CD8-positive, alpha-beta T cell (primary cell): ENCODE measurements at regions of chr14 and their contacts with region 1.

Region 1: DNA sequence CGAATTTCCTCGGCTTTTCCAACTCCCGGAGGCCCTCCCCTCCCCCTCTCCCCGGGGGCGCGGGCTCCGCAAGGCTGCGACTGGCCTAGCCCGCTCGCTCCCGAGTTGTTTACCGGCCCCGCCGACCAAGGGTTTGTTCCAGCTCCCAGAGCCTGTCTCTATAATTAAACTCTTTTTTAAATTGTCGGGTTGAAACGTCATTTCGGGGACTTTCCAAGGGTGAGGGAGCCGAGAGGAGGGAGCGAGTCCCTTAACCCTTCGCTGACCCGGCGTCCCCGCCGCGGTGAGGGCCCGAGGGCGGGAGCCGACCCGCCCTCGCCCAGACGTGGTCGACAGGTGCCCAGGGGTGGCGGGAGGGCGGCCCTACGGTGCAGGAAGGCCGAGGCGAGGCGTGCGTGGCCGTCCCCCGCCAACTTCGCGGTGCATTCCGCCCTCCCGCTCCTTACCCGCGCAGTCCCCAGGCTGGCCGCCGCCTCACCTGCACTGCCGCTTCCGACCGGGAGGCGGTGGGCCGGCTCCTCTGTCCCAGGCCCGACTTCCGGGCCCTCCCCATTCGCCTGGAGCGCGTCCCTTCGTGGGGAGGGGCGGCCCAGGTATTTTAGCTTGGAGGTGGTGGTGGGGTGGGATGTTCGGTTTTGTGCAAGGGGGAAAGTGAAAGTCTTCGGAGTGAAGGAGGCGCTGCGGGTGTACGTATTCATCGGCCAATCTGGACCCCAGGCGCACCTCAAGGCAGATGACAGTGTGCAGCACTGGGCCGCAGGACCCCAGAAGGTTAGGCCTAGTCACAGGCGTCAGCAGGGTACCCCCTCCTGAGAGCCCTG is 2.9 kb upstream of the ZFP36L1 start:
- DNase-seq: peak; percentile 60 to 94 (median 82)
- ATAC-seq: peak; percentile 41
- H3K4me3 ChIP-seq: peak overlapping the region; percentile 94 to 97
- H3K4me3 Mint-ChIP-seq: peak overlapping the region; percentile 92
- H3K27ac ChIP-seq: peak overlapping the region; percentile 99 to 100
- H3K27ac Mint-ChIP-seq: peak overlapping the region; percentile 100
- H3K4me1 ChIP-seq: peaks cover 18% of the 10 kb centered on the region
- H3K4me1 Mint-ChIP-seq: peaks cover 37% of the 10 kb centered on the region
- H3K27me3 ChIP-seq: no peaks in the 10 kb centered on the region
- H3K27me3 Mint-ChIP-seq: no peaks in the 10 kb centered on the region
- CTCF ChIP-seq: peak; percentile 71

Region 2: GRCh38 chr14:68506021-68506644 is 289.7 kb before region 1 on chr14:
- CTCF ChIA-PET with region 1: interaction called, 5 read pairs
- POLR2A ChIA-PET with region 1: interaction called, 90 read pairs
- intact Hi-C with region 1: loop called in 1 of 2 experiments (anchors 2 kb)
- DNase-seq: peak in 1 of 9 experiments; percentile 25
- ATAC-seq: no peak
- H3K4me3 ChIP-seq: no peak overlapping the region
- H3K4me3 Mint-ChIP-seq: peak overlapping the region; percentile 64
- H3K27ac ChIP-seq: peak overlapping the region; percentile 49 to 52
- H3K27ac Mint-ChIP-seq: peak overlapping the region; percentile 91
- H3K4me1 ChIP-seq: peaks cover 64% of the 10 kb centered on the region
- H3K4me1 Mint-ChIP-seq: peaks cover 73% of the 10 kb centered on the region
- H3K27me3 ChIP-seq: no peaks in the 10 kb centered on the region
- H3K27me3 Mint-ChIP-seq: no peaks in the 10 kb centered on the region
- CTCF ChIP-seq: no peak

Region 3: GRCh38 chr14:68780358-68781160 is 15.2 kb before region 1 on chr14:
- CTCF ChIA-PET with region 1: interaction called, 59 read pairs
- POLR2A ChIA-PET with region 1: interaction called, 164 read pairs
- intact Hi-C with region 1: loop called in 1 of 2 experiments (anchors 1 kb)
- DNase-seq: peak in 5 of 9 experiments; percentile 36 to 72 (median 58)
- ATAC-seq: peak; percentile 11
- H3K4me3 ChIP-seq: peak overlapping the region; percentile 29 to 41
- H3K4me3 Mint-ChIP-seq: peak overlapping the region; percentile 83
- H3K27ac ChIP-seq: peak overlapping the region; percentile 47 to 86
- H3K27ac Mint-ChIP-seq: peak overlapping the region; percentile 96
- H3K4me1 ChIP-seq: peaks cover 82% of the 10 kb centered on the region
- H3K4me1 Mint-ChIP-seq: peaks cover 84% of the 10 kb centered on the region
- H3K27me3 ChIP-seq: no peaks in the 10 kb centered on the region
- H3K27me3 Mint-ChIP-seq: no peaks in the 10 kb centered on the region
- CTCF ChIP-seq: no peak

Region 4: DNA sequence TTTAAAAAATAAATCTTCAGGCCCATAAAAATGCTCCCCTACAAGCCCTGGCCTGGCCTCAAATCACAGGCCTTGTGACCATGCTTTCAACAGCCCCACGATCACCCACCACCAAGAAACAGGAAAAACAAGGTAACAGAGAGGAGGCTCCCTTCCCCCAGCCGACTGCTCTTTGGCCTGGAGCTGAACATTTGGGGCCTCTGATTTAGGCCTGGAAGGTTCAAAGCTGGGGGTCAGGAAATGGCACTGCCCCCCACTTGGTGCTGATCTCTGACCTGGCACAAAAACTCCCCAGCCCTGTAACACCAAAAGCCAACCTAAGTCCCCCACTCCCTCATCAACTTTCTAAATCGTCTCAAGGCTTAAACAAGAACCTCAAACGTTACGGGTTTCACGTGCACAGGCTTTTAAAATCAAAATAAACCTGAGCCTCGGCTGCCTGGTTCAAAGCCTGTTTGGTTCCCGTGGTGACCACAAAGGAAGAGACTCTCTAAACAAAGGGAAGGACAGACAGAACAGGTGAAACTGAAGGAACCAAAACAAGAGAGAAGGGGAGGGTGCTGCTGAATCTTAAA is 174.3 kb after region 1 on chr14:
- CTCF ChIA-PET with region 1: no interaction called
- POLR2A ChIA-PET with region 1: no interaction called
- intact Hi-C with region 1: loop called (anchors 2 to 5 kb)
- DNase-seq: peak; percentile 30 to 86 (median 64)
- ATAC-seq: peak; percentile 59
- H3K4me3 ChIP-seq: peak overlapping the region; percentile 3 to 31
- H3K4me3 Mint-ChIP-seq: peak overlapping the region; percentile 81
- H3K27ac ChIP-seq: peak overlapping the region; percentile 67 to 73
- H3K27ac Mint-ChIP-seq: peak overlapping the region; percentile 93
- H3K4me1 ChIP-seq: peaks cover 97% of the 10 kb centered on the region
- H3K4me1 Mint-ChIP-seq: peaks cover 97% of the 10 kb centered on the region
- H3K27me3 ChIP-seq: no peaks in the 10 kb centered on the region
- H3K27me3 Mint-ChIP-seq: no peaks in the 10 kb centered on the region
- CTCF ChIP-seq: no peak

Region 5: DNA sequence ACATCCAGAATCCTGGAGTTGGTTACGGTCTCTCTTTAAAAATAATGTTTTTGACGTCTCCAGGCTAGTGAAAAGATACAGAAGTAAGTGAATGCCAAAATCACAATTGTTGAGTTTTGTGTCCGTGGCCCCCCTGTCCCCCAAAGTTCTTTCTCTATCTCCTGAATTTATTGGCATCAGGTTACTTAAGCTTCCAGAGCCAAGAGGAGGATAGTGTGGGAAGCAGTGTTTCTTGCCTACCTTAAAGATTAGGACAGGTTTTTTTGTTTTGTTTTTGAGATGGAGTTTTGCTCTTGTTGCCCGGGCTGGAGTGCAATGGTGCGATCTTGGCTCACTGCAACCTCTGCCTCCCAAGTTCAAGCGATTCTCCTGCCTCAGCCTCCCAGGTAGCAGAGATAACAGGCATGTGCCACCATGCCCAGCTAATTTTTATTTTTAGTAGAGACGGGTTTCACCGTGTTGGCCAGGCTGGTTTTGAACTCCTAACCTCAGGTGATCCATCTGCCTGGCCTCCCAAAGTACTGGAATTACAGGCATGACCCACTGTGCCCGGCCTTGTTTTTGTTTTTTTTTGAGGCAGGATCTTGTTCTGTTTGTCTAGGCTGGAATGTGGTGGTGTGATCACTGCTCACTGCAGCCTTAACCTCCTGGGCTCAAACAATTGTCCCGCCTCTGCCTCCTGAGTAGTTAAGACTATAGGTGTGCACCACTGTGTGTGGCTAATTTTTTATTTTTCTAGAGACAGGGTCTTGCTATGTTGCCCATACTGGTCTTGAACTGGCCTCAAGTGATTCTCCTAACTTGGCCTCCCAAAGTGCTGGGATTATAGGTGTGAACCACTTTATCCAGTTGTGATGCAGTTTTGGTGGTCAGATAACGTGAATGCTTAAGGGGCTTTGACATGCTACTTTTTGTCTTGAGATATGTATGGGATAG is 976.5 kb after region 1 on chr14:
- CTCF ChIA-PET with region 1: no interaction called
- POLR2A ChIA-PET with region 1: interaction called, 3 read pairs
- intact Hi-C with region 1: loop called in 1 of 2 experiments (anchors 10 kb)
- DNase-seq: peak in 1 of 9 experiments; percentile 34
- ATAC-seq: peak; percentile 16
- H3K4me3 ChIP-seq: no peak overlapping the region
- H3K4me3 Mint-ChIP-seq: no peak overlapping the region
- H3K27ac ChIP-seq: no peak overlapping the region
- H3K27ac Mint-ChIP-seq: peak overlapping the region; percentile 37
- H3K4me1 ChIP-seq: peaks cover 65% of the 10 kb centered on the region
- H3K4me1 Mint-ChIP-seq: peaks cover 86% of the 10 kb centered on the region
- H3K27me3 ChIP-seq: no peaks in the 10 kb centered on the region
- H3K27me3 Mint-ChIP-seq: no peaks in the 10 kb centered on the region
- CTCF ChIP-seq: no peak